GM10248 (cell line): ENCODE measurements at regions of chr7 and their contacts with region 1.

Region 1: DNA sequence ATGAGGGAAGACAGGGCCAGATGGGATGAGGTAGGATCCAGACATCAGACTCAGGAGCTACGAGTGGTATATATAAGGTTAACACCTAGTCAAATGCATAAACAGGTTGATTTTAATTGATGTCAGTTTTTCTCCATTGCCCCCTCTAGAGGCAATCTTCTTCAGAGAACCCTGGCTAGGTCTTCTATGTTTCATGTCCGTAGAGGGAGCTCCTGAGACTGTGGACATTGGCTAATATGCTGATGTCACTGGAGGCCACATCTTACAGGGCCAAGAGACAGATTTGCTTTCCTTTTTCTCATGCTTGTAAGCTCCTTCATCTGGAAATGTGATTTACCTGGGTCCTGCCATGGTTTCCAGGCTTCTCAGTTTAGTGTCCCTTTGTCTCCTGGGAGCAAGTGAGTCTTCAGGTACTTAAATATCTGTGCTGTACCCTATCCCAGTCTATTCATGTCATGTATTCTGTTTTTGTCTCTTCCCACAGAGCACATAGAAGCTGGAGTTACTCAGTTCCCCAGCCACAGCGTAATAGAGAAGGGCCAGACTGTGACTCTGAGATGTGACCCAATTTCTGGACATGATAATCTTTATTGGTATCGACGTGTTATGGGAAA is 161.6 kb upstream of the PRSS1 start:
- DNase-seq: peak; percentile 71
- CTCF ChIP-seq: peak; percentile 72

Region 2: GRCh38 chr7:141128506-141128905 is 1459.2 kb before region 1 on chr7:
- CTCF ChIA-PET with region 1: no interaction called
- POLR2A ChIA-PET with region 1: no interaction called
- DNase-seq: no peak
- CTCF ChIP-seq: no peak

Region 3: GRCh38 chr7:142523821-142524460 is 63.7 kb before region 1 on chr7:
- CTCF ChIA-PET with region 1: interaction called, 12 read pairs
- POLR2A ChIA-PET with region 1: no interaction called
- DNase-seq: no peak
- CTCF ChIP-seq: no peak

Region 4: DNA sequence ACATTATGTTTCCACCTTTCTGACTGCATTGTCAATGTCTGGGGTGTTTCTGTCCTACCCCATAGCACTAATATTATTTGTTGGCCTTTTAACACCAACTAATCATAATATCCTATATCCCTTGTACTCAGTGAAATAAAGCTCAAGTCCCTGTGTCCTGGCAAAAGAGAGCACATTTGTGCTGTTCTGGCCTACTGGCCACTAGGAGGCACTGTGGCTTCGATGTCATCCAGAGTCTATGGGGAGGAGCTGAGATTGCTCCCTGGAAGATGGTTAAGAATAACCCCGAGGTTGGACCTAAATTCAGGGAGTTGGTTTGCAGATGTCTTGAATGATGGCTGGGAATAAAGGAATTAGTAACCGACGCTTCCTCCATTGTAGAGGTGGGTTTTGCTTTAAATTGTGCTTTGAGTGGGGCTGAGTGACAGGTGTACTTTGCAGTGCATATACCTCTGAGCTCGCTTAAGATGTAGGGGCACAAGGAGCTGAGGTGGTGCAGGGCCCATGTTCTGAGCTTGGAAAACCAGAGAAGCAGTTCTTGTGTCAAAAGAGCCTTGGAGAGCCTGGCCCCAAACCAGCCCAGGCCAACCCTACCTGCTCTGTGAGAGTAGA is 29.6 kb before region 1 on chr7:
- CTCF ChIA-PET with region 1: interaction called, 49 read pairs
- POLR2A ChIA-PET with region 1: no interaction called
- DNase-seq: peak; percentile 56
- CTCF ChIP-seq: peak; percentile 91

Region 5: GRCh38 chr7:142598297-142598696 is 10.6 kb after region 1 on chr7:
- CTCF ChIA-PET with region 1: interaction called, 88 read pairs
- POLR2A ChIA-PET with region 1: no interaction called
- DNase-seq: no peak
- CTCF ChIP-seq: no peak

Region 6: GRCh38 chr7:142632291-142633134 is 44.8 kb after region 1 on chr7:
- CTCF ChIA-PET with region 1: interaction called, 10 read pairs
- POLR2A ChIA-PET with region 1: no interaction called
- DNase-seq: peak; percentile 79
- CTCF ChIP-seq: peak; percentile 79